Testis (tissue), 5 donors: ENCODE measurements at regions of chr18 and their contacts with region 1.

Region 1: DNA sequence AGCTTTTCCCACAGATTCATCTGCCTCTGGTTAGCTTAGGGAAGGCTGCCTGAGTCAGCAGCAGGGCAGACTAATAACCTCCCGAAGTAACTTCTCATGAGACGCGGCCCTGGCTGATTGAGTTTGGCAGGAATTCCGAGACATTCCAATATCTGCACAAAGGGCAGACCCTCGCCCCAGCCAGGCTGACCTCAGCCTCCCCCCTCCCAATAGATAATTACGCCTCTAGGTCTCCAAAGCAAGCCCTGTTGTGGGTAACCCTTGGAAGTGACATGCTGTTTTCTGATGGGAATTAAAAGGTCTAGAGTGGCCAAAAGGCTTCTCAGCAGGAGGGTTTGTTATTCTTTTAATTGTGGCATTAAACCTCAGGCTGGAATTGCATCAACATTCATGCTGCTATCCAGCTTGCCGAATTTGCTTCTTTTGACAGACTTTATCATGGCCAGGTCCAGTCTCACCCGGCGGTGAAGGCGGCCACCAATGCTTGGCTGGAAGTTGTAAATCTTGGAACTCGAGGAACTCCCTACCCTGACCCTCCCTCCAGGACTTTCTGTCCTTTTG is 98.0 kb upstream of the SLC14A2 start:
- DNase-seq: peak; percentile 75
- H3K4me3 ChIP-seq: no peak overlapping the region
- H3K27ac ChIP-seq: peak overlapping the region; percentile 64 to 72
- H3K4me1 ChIP-seq: peaks cover 31% of the 10 kb centered on the region
- H3K27me3 ChIP-seq: no peaks in the 10 kb centered on the region
- CTCF ChIP-seq: no peak
- POLR2A ChIP-seq: no peak

Region 2: DNA sequence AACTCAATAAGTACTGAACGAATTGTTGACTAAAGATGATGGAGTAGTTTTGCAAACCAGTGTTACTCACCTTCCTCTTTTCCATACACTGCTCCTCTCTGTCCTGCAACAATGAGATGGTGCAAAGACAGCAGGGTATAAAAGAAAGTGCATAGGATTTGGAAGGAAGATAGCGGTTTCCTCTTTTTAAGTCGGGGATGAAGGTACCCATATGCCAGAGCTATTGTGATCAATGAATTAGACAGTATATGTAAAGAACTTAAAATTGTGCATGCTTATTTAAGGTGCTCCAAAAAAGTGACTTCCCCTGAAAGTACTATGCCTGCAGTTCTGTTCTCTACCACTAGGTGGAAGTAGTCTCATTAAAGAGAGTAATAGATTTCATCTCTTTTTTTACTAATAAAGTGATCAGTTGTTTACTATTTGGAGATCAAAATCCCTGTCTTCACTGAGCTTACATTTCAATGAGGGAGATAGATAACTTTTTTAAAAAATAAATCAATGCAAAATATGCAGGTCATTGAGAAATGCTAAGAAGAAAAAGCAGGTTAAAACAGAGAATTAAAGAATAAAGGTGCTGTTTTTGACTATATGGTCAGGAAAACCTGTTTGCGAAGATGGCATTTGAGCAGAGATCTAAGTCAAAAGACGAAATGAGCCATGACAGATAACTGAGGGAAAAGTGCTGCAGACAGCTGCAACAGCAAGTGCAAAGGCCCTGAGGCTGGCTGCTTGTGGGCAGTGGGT is 241.7 kb before region 1 on chr18:
- intact Hi-C with region 1: no loop called
- DNase-seq: no peak
- H3K4me3 ChIP-seq: no peak overlapping the region
- H3K27ac ChIP-seq: no peak overlapping the region
- H3K4me1 ChIP-seq: no peaks in the 10 kb centered on the region
- H3K27me3 ChIP-seq: no peaks in the 10 kb centered on the region
- CTCF ChIP-seq: peak; percentile 47 to 94 (median 80)
- POLR2A ChIP-seq: no peak

Region 3: DNA sequence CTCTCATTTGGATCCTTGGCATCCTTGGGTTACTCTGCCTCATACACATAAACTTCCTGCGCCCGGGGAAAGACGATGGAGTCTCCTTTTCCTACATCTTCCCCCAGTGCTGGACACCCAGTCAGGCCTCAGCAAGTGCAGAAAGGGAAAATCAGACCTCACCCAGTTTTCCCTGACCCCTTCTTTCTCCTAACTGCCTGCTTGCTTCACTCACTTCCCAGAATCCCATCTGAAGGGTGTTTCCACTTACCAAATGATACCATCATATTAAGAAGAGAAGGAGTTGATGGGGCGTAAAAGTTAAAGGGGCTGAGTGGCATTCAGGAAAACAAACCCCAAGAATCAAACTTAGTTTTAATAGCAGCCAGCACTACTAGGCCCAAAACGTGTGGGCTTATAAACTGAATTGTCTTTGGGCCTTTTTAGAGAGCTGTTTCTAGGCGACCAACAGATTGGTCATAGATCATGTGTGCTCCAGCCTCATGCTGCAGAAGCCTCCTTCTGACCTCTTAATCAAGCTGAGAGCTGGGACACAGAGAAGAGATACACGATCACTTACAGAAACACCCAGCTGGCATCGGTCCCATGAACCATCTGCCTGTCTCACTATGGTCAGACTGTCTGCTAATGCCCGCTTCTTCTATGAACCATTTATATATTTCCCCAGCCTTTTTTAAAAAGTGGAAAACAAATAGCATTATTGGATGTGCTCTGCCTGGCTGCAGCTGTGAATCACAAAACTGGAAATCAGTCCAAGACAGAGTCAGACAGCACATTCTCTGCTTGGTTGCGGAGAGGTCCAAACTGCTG is 67.6 kb before region 1 on chr18:
- intact Hi-C with region 1: loop called (anchors 10 kb)
- DNase-seq: peak; percentile 74
- H3K4me3 ChIP-seq: no peak overlapping the region
- H3K27ac ChIP-seq: peak overlapping the region; percentile 12 to 44
- H3K4me1 ChIP-seq: peaks cover 26% of the 10 kb centered on the region
- H3K27me3 ChIP-seq: no peaks in the 10 kb centered on the region
- CTCF ChIP-seq: no peak
- POLR2A ChIP-seq: no peak